ENCODE measurements at regions of chr4 and their contacts with region 1.

Region 1: GRCh38 chr4:118772081-118772766 is 63.7 kb downstream of the SEC24D start:
- DNase-seq: no peak
- H3K4me3 ChIP-seq: no peak overlapping the region
- H3K27ac ChIP-seq: no peak overlapping the region
- H3K27me3 ChIP-seq: no peaks in the 10 kb centered on the region
- CTCF ChIP-seq: peak; percentile 58

Region 2: GRCh38 chr4:118034053-118034785 is 738.0 kb before region 1 on chr4 and contains the start of gene NDST3:
- CTCF ChIA-PET with region 1: no interaction called
- POLR2A ChIA-PET with region 1: no interaction called
- DNase-seq: no peak
- H3K4me3 ChIP-seq: peak within 1 kb of the TSS; percentile 60
- H3K27ac ChIP-seq: no peak within 1 kb of the TSS
- H3K27me3 ChIP-seq: peaks cover 5% of the 10 kb centered on the region
- CTCF ChIP-seq: 0 out of 2 replicates have a peak, but pooled peaks have one; percentile 15
- polyA plus RNA-seq, gene NDST3: 0.02 and 0.04 TPM in 2 replicates

Region 3: GRCh38 chr4:118716304-118716703 is 55.9 kb before region 1 on chr4:
- CTCF ChIA-PET with region 1: no interaction called
- POLR2A ChIA-PET with region 1: no interaction called
- DNase-seq: no peak
- H3K4me3 ChIP-seq: no peak overlapping the region
- H3K27ac ChIP-seq: no peak overlapping the region
- H3K27me3 ChIP-seq: no peaks in the 10 kb centered on the region
- CTCF ChIP-seq: no peak

Region 4: DNA sequence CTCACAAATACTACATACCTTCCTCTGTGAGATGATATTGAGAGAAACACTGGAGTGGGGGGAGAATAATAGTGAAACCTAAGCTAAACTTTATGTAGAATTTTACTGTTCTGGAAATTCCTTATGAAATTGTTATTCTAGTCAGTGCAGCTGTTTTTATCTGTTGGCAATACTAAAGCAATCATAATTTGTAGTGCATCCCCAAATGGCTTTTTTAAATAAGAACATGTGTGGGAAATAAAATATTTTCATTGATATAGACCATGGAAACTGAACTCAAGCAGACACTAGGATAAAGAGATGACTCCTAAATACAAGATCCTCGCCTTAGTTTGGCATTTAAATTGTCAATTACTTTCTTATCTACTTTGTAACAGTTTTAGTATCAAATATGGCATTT is 12.6 kb after region 1 on chr4:
- CTCF ChIA-PET with region 1: interaction called, 11 read pairs
- POLR2A ChIA-PET with region 1: no interaction called
- DNase-seq: no peak
- H3K4me3 ChIP-seq: no peak overlapping the region
- H3K27ac ChIP-seq: no peak overlapping the region
- H3K27me3 ChIP-seq: no peaks in the 10 kb centered on the region
- CTCF ChIP-seq: no peak

Region 5: GRCh38 chr4:118790544-118790943 is 18.3 kb after region 1 on chr4:
- CTCF ChIA-PET with region 1: interaction called, 11 read pairs
- POLR2A ChIA-PET with region 1: interaction called, 5 read pairs
- DNase-seq: no peak
- H3K4me3 ChIP-seq: no peak overlapping the region
- H3K27ac ChIP-seq: no peak overlapping the region
- H3K27me3 ChIP-seq: no peaks in the 10 kb centered on the region
- CTCF ChIP-seq: no peak

Region 6: GRCh38 chr4:118888666-118889311 is 116.6 kb after region 1 on chr4 and contains the start of gene SYNPO2:
- CTCF ChIA-PET with region 1: interaction called, 67 read pairs
- POLR2A ChIA-PET with region 1: no interaction called
- DNase-seq: peak; percentile 54
- H3K4me3 ChIP-seq: peak within 1 kb of the TSS; percentile 67
- H3K27ac ChIP-seq: no peak within 1 kb of the TSS
- H3K27me3 ChIP-seq: no peaks in the 10 kb centered on the region
- CTCF ChIP-seq: no peak
- polyA plus RNA-seq, gene SYNPO2: 4.8 and 5.1 TPM in 2 replicates

Region 7: DNA sequence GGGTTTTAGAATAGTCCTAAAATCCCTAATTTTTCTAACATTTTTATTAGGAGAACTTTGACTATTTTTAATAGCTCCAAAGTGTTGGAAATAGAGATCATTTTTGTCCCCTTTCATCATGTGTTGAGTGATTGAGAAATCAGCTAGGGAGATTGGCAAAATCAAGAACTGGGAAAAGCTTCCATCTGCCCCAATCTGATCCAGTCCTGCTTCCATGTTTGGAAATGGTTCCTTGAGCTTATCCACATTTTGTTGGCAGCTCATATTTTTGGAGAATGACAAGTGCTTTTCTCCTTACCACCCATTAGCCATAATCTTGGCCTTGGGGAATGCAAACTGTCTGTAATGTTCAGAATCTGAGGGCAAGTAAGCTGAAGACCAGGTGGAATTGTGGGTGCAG is 190.3 kb after region 1 on chr4:
- CTCF ChIA-PET with region 1: interaction called, 116 read pairs
- POLR2A ChIA-PET with region 1: no interaction called
- DNase-seq: no peak
- H3K4me3 ChIP-seq: no peak overlapping the region
- H3K27ac ChIP-seq: no peak overlapping the region
- H3K27me3 ChIP-seq: no peaks in the 10 kb centered on the region
- CTCF ChIP-seq: no peak

Region 8: GRCh38 chr4:118968005-118968404 is 195.8 kb after region 1 on chr4:
- CTCF ChIA-PET with region 1: interaction called, 116 read pairs
- POLR2A ChIA-PET with region 1: interaction called, 3 read pairs
- DNase-seq: no peak
- H3K4me3 ChIP-seq: peak overlapping the region; percentile 23
- H3K27ac ChIP-seq: peak overlapping the region; percentile 88
- H3K27me3 ChIP-seq: no peaks in the 10 kb centered on the region
- CTCF ChIP-seq: no peak

Region 9: GRCh38 chr4:118981839-118982381 is 209.7 kb after region 1 on chr4:
- CTCF ChIA-PET with region 1: interaction called, 10 read pairs
- POLR2A ChIA-PET with region 1: no interaction called
- DNase-seq: peak; percentile 91
- H3K4me3 ChIP-seq: no peak overlapping the region
- H3K27ac ChIP-seq: no peak overlapping the region
- H3K27me3 ChIP-seq: no peaks in the 10 kb centered on the region
- CTCF ChIP-seq: peak; percentile 78